ENCODE measurements at regions of chr9 and their contacts with region 1.

Region 1: GRCh38 chr9:19184144-19184917 is 46.2 kb upstream of the DENND4C start:
- DNase-seq: peak; percentile 74 to 86
- ATAC-seq: peak; percentile 96 to 99
- H3K4me3 ChIP-seq: no peak overlapping the region
- H3K27ac ChIP-seq: peak overlapping the region; percentile 90 to 91
- H3K4me1 ChIP-seq: peaks cover 42% of the 10 kb centered on the region
- CTCF ChIP-seq: no peak
- EP300 ChIP-seq: peak; percentile 37 to 75; a peak in 2 of 5 replicates
- POLR2A ChIP-seq: no peak
- RAD21 ChIP-seq: no peak; a peak in 2 of 5 replicates

Region 2: GRCh38 chr9:18985464-18985951 is 198.8 kb before region 1 on chr9:
- CTCF ChIA-PET with region 1: no interaction called
- POLR2A ChIA-PET with region 1: no interaction called
- DNase-seq: no peak
- ATAC-seq: no peak
- H3K4me3 ChIP-seq: no peak overlapping the region
- H3K27ac ChIP-seq: no peak overlapping the region
- H3K4me1 ChIP-seq: no peaks in the 10 kb centered on the region
- CTCF ChIP-seq: no peak
- EP300 ChIP-seq: no peak
- POLR2A ChIP-seq: no peak
- RAD21 ChIP-seq: no peak

Region 3: DNA sequence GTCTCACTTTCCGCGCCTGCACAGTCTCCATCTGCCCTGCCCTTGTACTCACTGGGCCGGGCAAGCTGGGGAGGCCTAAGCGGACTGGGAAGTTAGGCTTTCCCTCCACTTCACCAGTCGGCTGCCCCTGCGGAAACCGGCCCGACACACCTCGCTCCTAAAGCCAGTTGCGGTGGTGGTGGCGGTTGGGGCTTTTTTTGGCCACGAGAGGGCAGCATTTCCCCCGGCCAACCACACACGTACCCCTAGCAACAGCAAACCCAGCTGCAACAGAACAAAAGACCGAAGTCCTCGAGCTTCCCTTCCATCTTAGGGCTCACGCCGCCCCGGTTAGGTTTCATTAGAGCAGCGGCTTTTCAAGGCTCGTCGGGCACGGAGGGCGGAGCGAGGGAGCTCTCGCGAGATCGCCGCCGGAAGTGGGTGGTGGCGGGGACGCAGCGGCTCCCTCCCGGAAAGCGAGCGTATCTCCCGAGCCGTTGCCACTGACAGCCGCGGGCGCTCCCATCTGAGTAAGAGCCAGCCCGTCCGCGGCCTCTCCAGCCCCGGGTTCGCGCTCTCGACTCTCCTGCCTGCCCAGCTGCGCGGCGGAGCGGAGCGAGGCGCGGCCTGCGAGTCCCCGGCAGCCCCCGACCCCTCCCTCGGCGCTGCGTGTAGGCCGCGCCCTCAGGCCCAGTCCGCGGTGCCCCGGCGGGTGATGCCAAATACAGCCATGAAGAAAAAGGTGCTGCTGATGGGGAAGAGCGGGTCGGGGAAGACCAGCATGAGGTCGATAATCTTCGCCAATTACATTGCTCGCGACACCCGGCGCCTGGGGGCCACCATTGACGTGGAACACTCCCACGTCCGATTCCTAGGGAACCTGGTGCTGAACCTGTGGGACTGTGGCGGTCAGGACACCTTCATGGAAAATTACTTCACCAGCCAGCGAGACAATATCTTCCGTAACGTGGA is 135.1 kb before region 1 on chr9 and contains the start of gene RRAGA:
- CTCF ChIA-PET with region 1: interaction called, 13 read pairs
- POLR2A ChIA-PET with region 1: interaction called, 4 read pairs
- DNase-seq: peak; percentile 94 to 97
- ATAC-seq: peak; percentile 90 to 93
- H3K4me3 ChIP-seq: peak within 1 kb of the TSS; percentile 82
- H3K27ac ChIP-seq: peak within 1 kb of the TSS; percentile 92 to 95
- H3K4me1 ChIP-seq: peaks cover 21% of the 10 kb centered on the region
- CTCF ChIP-seq: peak; percentile 79
- EP300 ChIP-seq: no peak
- POLR2A ChIP-seq: peak; percentile 98
- RAD21 ChIP-seq: peak; percentile 56 to 80
- polyA plus RNA-seq, gene RRAGA: 133 and 136 TPM in 2 replicates

Measured in A549 (cell line).